ENCODE measurements at regions of chr1 and their contacts with region 1.

Region 1: DNA sequence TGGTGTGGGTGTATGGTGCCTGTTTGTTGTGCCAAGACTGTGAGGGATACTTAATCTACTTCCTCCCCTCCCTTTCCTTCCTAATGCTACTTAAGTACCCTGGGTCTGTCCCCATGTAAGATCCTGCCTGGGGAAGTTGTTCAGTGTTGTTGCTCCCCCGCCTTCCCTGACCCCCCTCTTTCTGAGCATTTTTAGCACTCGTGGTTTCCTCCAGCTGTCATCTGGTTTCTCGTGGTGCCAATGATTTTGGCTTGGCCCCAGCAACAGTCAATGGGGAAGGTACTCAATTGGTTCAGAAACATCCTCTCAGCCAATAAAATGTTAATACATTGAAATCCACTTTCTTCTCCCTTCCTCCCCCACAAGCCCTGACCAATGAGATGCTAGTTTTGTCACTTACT is 8.0 kb upstream of the B4GALT3 start:
- DNase-seq: no peak
- ATAC-seq: no peak
- H3K4me3 ChIP-seq: no peak overlapping the region
- H3K27ac ChIP-seq: no peak overlapping the region
- H3K4me1 ChIP-seq: peaks cover 12% of the 10 kb centered on the region
- CTCF ChIP-seq: no peak
- EP300 ChIP-seq: no peak
- POLR2A ChIP-seq: no peak
- RAD21 ChIP-seq: no peak

Region 2: DNA sequence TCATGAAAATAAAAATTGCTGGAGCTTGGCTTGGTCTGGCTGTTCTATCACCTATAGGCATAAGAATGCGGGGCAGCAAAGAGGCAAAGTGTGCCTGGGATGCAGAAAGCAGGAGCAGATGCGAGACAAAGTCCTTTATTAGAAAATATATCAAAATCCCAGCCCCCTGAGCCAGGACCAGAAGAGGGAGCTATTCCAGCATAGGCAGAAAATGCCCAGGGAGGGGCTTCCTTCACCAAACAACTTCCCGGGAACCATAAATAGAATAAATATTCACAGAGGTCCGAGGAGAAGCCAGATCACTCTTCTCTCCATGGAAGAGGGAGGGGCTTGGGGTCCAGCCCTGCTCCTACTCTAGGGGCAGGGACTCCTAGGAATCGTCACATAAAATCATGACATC is 14.1 kb before region 1 on chr1:
- CTCF ChIA-PET with region 1: interaction called, 38 read pairs
- POLR2A ChIA-PET with region 1: interaction called, 3 read pairs
- DNase-seq: no peak
- ATAC-seq: no peak
- H3K4me3 ChIP-seq: no peak overlapping the region
- H3K27ac ChIP-seq: no peak overlapping the region
- H3K4me1 ChIP-seq: peaks cover 11% of the 10 kb centered on the region; the same call in 2 of the 3 replicates
- CTCF ChIP-seq: peak; percentile 10; the same call in 1 of the 3 replicates
- EP300 ChIP-seq: no peak
- POLR2A ChIP-seq: no peak
- RAD21 ChIP-seq: no peak

Region 3: DNA sequence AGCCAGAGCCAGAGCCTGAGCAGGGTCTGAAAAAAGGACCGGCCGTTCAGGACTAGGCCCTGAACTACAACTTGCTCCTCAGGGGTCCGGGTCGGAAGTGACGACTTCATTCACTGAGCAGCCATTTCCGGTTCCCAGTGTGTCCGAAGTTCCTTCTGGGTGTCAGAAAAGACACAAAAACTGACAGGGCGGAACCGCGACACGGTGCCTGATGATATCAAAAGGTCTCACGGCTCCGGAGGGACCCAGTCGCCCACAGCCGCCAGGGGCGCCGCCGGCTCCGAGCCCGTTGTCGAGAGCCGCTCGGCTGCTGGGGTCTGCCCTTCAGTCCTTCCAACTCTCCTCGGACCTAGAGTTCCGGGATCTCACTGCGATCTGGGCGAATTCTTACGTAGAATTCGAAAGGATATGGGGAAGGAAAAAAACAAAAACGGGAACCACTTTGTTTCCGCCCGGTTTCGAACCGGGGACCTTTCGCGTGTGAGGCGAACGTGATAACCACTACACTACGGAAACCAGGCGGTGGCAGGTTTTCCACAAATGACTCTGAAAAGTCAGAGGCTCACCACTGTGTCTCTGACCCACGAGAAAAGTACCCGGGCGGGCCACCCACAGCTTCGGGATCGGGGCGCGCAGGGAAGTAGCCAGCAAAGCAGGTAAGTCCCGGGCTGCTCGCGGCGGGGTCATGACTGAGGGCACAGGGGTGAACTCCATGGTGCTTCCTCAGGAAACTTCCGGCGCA is 214.1 kb after region 1 on chr1:
- CTCF ChIA-PET with region 1: no interaction called
- POLR2A ChIA-PET with region 1: interaction called, 11 read pairs
- DNase-seq: peak; percentile 93 to 96
- ATAC-seq: peak; percentile 85 to 87
- H3K4me3 ChIP-seq: peak overlapping the region; percentile 68
- H3K27ac ChIP-seq: peak overlapping the region; percentile 94 to 97
- H3K4me1 ChIP-seq: peaks cover 21% of the 10 kb centered on the region
- CTCF ChIP-seq: no peak; the same call in 2 of the 3 replicates
- EP300 ChIP-seq: no peak
- POLR2A ChIP-seq: peak; percentile 73
- RAD21 ChIP-seq: no peak; a peak in 1 of 5 replicates

Measured in A549 (cell line).